Natural killer cell (primary cell): ENCODE measurements at regions of chr7 and their contacts with region 1.

Region 1: DNA sequence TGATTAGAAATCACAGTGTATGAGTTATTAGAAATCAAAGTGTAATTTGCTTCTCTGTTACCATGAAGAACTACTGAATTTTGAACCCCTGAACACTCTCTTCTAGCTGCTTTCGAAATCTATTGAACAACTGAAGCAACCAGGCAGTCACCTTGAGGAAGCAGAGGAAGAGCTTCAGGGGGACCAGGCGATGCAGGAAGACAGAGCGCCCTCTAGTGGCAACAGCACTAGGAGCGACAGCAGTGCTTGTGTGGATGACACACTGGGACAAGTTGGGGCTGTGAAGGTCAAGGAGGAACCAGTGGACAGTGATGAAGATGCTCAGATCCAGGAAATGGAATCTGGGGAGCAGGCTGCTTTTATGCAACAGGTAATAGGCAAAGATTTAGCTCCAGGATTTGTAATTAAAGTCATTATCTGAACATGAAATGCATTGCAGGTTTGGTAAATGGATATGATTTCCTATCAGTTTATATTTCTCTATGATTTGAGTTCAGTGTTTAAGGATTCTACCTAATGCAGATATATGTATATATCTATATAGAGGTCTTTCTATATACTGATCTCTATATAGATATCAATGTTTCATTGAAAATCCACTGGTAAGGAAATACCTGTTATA is 170.7 kb downstream of the HDAC9 start:
- DNase-seq: peak; percentile 54 to 80
- ATAC-seq: peak; percentile 79 to 96 (median 85)
- H3K4me3 ChIP-seq: no peak overlapping the region
- H3K4me3 Mint-ChIP-seq: no peak overlapping the region
- H3K27ac ChIP-seq: no peak overlapping the region
- H3K27ac Mint-ChIP-seq: no peak overlapping the region
- H3K4me1 ChIP-seq: no peaks in the 10 kb centered on the region
- H3K4me1 Mint-ChIP-seq: no peaks in the 10 kb centered on the region
- H3K27me3 ChIP-seq: no peaks in the 10 kb centered on the region
- H3K27me3 Mint-ChIP-seq: no peaks in the 10 kb centered on the region
- CTCF ChIP-seq: peak; percentile 97

Region 2: DNA sequence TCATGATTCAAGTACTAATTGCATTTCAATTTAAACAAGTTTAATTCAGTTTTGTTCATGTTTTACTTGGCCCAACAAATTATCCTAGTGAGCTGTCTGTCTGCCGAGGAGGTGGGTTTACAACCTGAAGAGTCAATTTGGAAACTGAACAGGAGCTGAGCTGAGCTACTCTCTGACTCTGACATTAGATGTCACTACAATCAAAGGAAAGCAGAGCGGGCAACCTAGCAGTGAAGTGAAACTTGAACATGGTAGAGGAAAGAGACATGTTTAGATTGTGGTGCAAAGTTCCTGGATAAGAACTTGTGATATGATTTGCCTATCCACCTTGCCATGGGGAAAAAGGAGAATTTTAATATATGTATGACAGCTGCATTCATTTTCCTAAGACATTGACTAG is 1774.9 kb before region 1 on chr7:
- intact Hi-C with region 1: loop called (anchors 5 kb)
- DNase-seq: peak in 1 of 2 donors; percentile 59
- ATAC-seq: peak in 2 of 3 donors; percentile 36 to 70
- H3K4me3 ChIP-seq: no peak overlapping the region
- H3K4me3 Mint-ChIP-seq: no peak overlapping the region
- H3K27ac ChIP-seq: no peak overlapping the region
- H3K27ac Mint-ChIP-seq: no peak overlapping the region
- H3K4me1 ChIP-seq: no peaks in the 10 kb centered on the region
- H3K4me1 Mint-ChIP-seq: peaks cover 21 to 22% of the 10 kb centered on the region in 2 donors
- H3K27me3 ChIP-seq: no peaks in the 10 kb centered on the region
- H3K27me3 Mint-ChIP-seq: peaks cover 3 to 5% of the 10 kb centered on the region in 2 donors
- CTCF ChIP-seq: peak; percentile 24

Region 3: GRCh38 chr7:17769918-17770317 is 896.3 kb before region 1 on chr7:
- intact Hi-C with region 1: loop called (anchors 10 kb)
- DNase-seq: peak in 1 of 2 donors; percentile 68
- ATAC-seq: peak; percentile 40 to 65 (median 62)
- H3K4me3 ChIP-seq: no peak overlapping the region
- H3K4me3 Mint-ChIP-seq: no peak overlapping the region
- H3K27ac ChIP-seq: no peak overlapping the region
- H3K27ac Mint-ChIP-seq: no peak overlapping the region
- H3K4me1 ChIP-seq: no peaks in the 10 kb centered on the region
- H3K4me1 Mint-ChIP-seq: peaks cover 14 to 24% of the 10 kb centered on the region in 2 donors
- H3K27me3 ChIP-seq: no peaks in the 10 kb centered on the region
- H3K27me3 Mint-ChIP-seq: no peaks in the 10 kb centered on the region
- CTCF ChIP-seq: peak; percentile 54

Region 4: DNA sequence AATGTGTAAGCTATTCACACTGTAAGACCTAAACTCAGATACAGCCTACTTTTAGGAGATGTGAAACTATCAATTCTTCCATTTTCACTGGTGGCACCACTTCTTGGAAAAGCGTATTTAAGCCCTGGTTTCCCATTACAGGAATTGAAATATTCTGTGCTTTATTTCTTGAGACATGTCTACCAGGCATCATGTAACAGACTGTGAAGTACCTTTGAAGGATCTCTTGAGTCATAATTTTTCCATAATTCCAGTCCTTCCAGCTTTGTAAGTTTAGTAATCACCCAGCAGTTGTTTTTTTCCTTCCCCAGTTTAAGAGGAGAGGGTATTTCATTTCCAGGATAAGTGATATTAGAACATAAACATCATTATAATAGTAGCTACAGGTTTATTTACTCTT is 452.6 kb before region 1 on chr7:
- intact Hi-C with region 1: loop called (anchors 2 kb)
- DNase-seq: no peak
- ATAC-seq: no peak
- H3K4me3 ChIP-seq: no peak overlapping the region
- H3K4me3 Mint-ChIP-seq: no peak overlapping the region
- H3K27ac ChIP-seq: no peak overlapping the region
- H3K27ac Mint-ChIP-seq: no peak overlapping the region
- H3K4me1 ChIP-seq: no peaks in the 10 kb centered on the region
- H3K4me1 Mint-ChIP-seq: peaks cover 0 to 5% of the 10 kb centered on the region in 2 donors
- H3K27me3 ChIP-seq: no peaks in the 10 kb centered on the region
- H3K27me3 Mint-ChIP-seq: no peaks in the 10 kb centered on the region
- CTCF ChIP-seq: no peak

Region 5: GRCh38 chr7:18352339-18353255 is 313.6 kb before region 1 on chr7:
- intact Hi-C with region 1: loop called (anchors 1 kb)
- DNase-seq: peak in 1 of 2 donors; percentile 49
- ATAC-seq: peak in 1 of 3 donors; percentile 46
- H3K4me3 ChIP-seq: no peak overlapping the region
- H3K4me3 Mint-ChIP-seq: no peak overlapping the region
- H3K27ac ChIP-seq: no peak overlapping the region
- H3K27ac Mint-ChIP-seq: no peak overlapping the region
- H3K4me1 ChIP-seq: no peaks in the 10 kb centered on the region
- H3K4me1 Mint-ChIP-seq: peaks cover 9 to 10% of the 10 kb centered on the region in 2 donors
- H3K27me3 ChIP-seq: no peaks in the 10 kb centered on the region
- H3K27me3 Mint-ChIP-seq: no peaks in the 10 kb centered on the region
- CTCF ChIP-seq: no peak

Region 6: GRCh38 chr7:18939771-18940592 is 273.8 kb after region 1 on chr7:
- intact Hi-C with region 1: no loop called
- DNase-seq: no peak
- ATAC-seq: no peak
- H3K4me3 ChIP-seq: no peak overlapping the region
- H3K4me3 Mint-ChIP-seq: no peak overlapping the region
- H3K27ac ChIP-seq: no peak overlapping the region
- H3K27ac Mint-ChIP-seq: no peak overlapping the region
- H3K4me1 ChIP-seq: no peaks in the 10 kb centered on the region
- H3K4me1 Mint-ChIP-seq: no peaks in the 10 kb centered on the region
- H3K27me3 ChIP-seq: no peaks in the 10 kb centered on the region
- H3K27me3 Mint-ChIP-seq: no peaks in the 10 kb centered on the region
- CTCF ChIP-seq: no peak

Region 7: DNA sequence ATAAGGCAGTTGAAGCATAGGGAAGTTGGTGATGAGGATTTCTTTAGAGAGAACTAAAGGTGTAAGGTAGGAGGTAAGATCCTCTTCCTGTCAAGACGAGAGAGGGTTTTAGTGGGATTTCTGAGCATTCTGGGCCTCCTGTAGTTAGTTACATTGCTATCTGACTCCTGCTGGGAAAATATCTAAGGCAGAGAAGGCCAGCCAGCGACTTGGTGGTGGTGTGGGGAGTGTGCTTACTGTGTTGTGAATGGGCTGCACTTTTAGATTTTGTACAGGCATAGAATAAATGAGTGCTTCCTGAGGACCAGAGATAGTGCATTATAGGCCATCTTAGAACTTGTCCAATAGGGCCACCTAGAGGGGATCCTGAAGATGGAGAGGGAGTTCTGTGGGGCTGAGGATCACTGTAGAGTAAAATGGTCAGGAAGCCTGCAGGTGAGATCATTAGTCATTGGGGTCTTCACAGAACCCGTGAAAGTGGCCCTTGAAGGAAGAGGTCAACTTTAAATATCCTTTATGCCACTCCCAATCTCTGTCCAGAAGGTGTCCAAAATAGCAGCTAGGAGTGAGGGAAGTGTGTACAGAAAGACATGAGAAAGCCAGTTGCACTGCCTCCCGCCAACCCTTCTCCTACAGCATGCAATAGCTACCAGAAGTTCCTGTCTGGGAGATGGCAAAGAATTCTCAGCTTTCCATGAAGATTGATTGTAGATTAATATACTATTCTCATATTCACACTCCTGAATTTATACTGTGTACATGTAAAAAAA is 776.0 kb after region 1 on chr7:
- intact Hi-C with region 1: loop called (anchors 1 kb)
- DNase-seq: no peak
- ATAC-seq: peak; percentile 52 to 80 (median 73)
- H3K4me3 ChIP-seq: no peak overlapping the region
- H3K4me3 Mint-ChIP-seq: no peak overlapping the region
- H3K27ac ChIP-seq: no peak overlapping the region
- H3K27ac Mint-ChIP-seq: no peak overlapping the region
- H3K4me1 ChIP-seq: no peaks in the 10 kb centered on the region
- H3K4me1 Mint-ChIP-seq: peaks cover 7 to 12% of the 10 kb centered on the region in 2 donors
- H3K27me3 ChIP-seq: no peaks in the 10 kb centered on the region
- H3K27me3 Mint-ChIP-seq: peaks cover 0 to 33% of the 10 kb centered on the region in 2 donors
- CTCF ChIP-seq: peak; percentile 38